ENCODE measurements at regions of chr6 and their contacts with region 1.

Region 1: GRCh38 chr6:110815217-110816109 is at the start of gene CDK19:
- DNase-seq: peak; percentile 98 to 99 (median 98)
- ATAC-seq: peak; percentile 97 to 98 (median 98)
- H3K4me3 ChIP-seq: peak within 1 kb of the TSS; percentile 52 to 98 (median 94)
- H3K27ac ChIP-seq: peak within 1 kb of the TSS; percentile 83 to 98 (median 94)
- H3K4me1 ChIP-seq: peaks cover 0 to 46% (median 10%) of the 10 kb centered on the region in 12 donors
- H3K27me3 ChIP-seq: no peaks in the 10 kb centered on the region
- CTCF ChIP-seq: no peak
- POLR2A ChIP-seq: peak in 1 of 2 donors; percentile 59
- total RNA-seq, gene CDK19: 5.0 to 16.3 (median 9.2) TPM

Region 2: GRCh38 chr6:110528101-110528929 is 287.1 kb before region 1 on chr6:
- intact Hi-C with region 1: loop called in 3 of 10 experiments (anchors 10 kb)
- DNase-seq: peak in 4 of 5 donors; percentile 38 to 45 (median 41)
- ATAC-seq: peak; percentile 57 to 83 (median 79)
- H3K4me3 ChIP-seq: no peak overlapping the region
- H3K27ac ChIP-seq: peak overlapping the region in 6 of 12 donors; percentile 0 to 42 (median 26)
- H3K4me1 ChIP-seq: peaks cover 0 to 20% (median 5%) of the 10 kb centered on the region in 12 donors
- H3K27me3 ChIP-seq: no peaks in the 10 kb centered on the region
- CTCF ChIP-seq: peak; percentile 61 to 83 (median 78)
- POLR2A ChIP-seq: no peak

Region 3: DNA sequence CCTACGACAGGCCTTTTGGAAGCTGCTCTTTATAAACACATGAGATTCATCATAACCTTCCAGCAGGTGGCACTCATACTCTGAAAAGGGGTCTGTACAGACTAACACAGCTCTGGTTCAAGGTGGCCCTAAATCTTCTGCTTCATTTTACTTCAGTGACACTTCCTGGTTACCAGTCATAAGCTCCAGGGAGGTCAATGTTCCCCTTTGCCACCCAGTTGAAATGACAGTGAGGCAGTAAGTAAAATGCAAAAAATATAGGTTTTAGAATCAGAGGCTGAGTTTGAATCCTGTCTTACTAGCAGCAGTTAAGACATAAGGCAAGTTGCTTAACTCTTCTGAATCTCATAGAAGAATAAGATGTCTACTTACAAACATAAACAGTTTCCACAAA is 133.0 kb before region 1 on chr6:
- intact Hi-C with region 1: loop called in 5 of 10 experiments (anchors 5 to 10 kb)
- DNase-seq: peak in 3 of 5 donors; percentile 47 to 69 (median 66)
- ATAC-seq: peak; percentile 92 to 98 (median 96)
- H3K4me3 ChIP-seq: no peak overlapping the region
- H3K27ac ChIP-seq: peak overlapping the region in 9 of 12 donors; percentile 6 to 65 (median 41)
- H3K4me1 ChIP-seq: peaks cover 0 to 25% (median 10%) of the 10 kb centered on the region in 12 donors
- H3K27me3 ChIP-seq: no peaks in the 10 kb centered on the region
- CTCF ChIP-seq: peak; percentile 53 to 85 (median 73)
- POLR2A ChIP-seq: no peak

Region 4: DNA sequence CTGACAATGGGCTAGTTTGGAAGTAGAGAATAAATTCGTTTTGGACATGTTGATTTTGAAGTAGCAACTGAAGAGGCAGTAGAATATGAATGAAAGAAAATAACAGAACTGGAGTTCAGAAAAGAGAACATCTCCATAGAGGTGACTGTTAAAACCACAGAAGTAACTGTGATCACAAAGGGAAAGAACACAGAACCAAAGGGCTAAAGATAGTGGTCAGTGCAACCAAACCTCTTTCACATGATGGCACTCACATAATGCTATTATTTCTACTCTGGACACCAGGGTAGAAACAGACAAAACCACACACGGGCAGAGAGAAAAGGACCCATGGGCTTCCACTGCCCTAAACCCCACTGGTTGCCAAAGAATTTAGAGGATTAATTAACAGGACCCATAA is 58.6 kb before region 1 on chr6:
- intact Hi-C with region 1: no loop called
- DNase-seq: no peak
- ATAC-seq: no peak
- H3K4me3 ChIP-seq: no peak overlapping the region
- H3K27ac ChIP-seq: no peak overlapping the region
- H3K4me1 ChIP-seq: peaks cover 0 to 4% (median 0%) of the 10 kb centered on the region in 12 donors
- H3K27me3 ChIP-seq: no peaks in the 10 kb centered on the region
- CTCF ChIP-seq: no peak
- POLR2A ChIP-seq: no peak

Region 5: DNA sequence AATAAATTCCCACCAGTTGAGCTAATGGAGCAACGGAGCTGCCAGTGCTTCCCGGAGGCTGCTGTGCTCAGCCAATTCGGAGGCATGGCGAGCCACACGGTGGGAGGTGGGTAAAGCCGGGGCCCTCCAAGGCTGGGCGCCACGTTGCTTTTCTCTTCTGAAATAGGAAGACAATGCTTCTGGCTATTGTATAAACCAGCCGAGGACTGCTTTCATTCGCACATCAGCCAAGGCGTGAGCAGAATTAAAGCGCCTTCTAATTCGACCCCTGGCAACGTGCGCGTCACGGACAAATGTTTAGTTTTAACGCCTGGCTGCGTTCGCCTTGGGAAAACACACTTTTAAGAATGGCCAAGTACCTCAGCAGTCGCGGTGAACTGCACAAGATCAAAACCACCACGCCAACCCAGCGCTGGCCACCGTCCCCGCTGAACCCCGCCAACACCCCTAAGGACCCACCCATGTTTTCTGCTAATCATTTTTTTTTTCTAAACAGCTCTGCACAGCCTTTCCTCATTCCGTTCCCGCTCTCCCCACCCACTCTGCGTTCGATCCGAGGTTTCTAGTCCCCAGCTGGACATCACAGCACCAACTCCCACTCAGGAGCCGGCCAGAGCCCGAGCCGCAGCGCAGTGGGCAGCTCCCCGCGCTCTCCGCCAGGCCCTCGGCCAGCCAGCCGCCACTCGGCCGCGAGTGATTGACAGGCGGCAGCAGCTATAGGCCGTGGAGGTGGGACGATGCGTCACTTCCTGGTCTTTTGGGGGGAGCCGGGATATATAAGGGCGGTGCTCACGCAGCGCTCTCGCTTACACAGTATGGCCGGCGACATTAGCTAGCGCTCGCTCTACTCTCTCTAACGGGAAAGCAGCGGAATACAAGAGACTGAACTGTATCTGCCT is 58.8 kb after region 1 on chr6 and contains the start of gene AMD1:
- intact Hi-C with region 1: loop called (anchors 1 to 5 kb)
- DNase-seq: peak; percentile 98 to 99 (median 98)
- ATAC-seq: peak; percentile 92 to 95 (median 94)
- H3K4me3 ChIP-seq: peak within 1 kb of the TSS; percentile 74 to 95 (median 90)
- H3K27ac ChIP-seq: peak within 1 kb of the TSS; percentile 74 to 98 (median 94)
- H3K4me1 ChIP-seq: peaks cover 2 to 36% (median 29%) of the 10 kb centered on the region in 12 donors
- H3K27me3 ChIP-seq: no peaks in the 10 kb centered on the region
- CTCF ChIP-seq: no peak
- POLR2A ChIP-seq: peak; percentile 93 to 98
- total RNA-seq, gene AMD1: 44.5 to 85.6 (median 70.4) TPM

Region 6: GRCh38 chr6:110958329-110959192 is 143.1 kb after region 1 on chr6 and contains the start of gene GTF3C6:
- intact Hi-C with region 1: loop called in 4 of 10 experiments (anchors 5 to 10 kb)
- DNase-seq: peak; percentile 94 to 97 (median 96)
- ATAC-seq: peak; percentile 97 to 99 (median 99)
- H3K4me3 ChIP-seq: peak within 1 kb of the TSS; percentile 60 to 97 (median 82)
- H3K27ac ChIP-seq: peak within 1 kb of the TSS; percentile 67 to 96 (median 91)
- H3K4me1 ChIP-seq: peaks cover 0 to 23% (median 11%) of the 10 kb centered on the region in 12 donors
- H3K27me3 ChIP-seq: no peaks in the 10 kb centered on the region
- CTCF ChIP-seq: peak in 2 of 12 donors; percentile 6 to 14
- POLR2A ChIP-seq: peak in 1 of 2 donors; percentile 66
- total RNA-seq, gene GTF3C6: 55.4 to 133 (median 104) TPM

Measured in heart left ventricle (tissue), 16 donors.